Activated CD4-positive, alpha-beta T cell treated with anti-CD3 and anti-CD28 coated beads, Interleukin-2, amount 10 ng/mL, durations not matched to agents 24 days and 14 days (primary cell): ENCODE measurements at regions of chr5 and their contacts with region 1.

Region 1: DNA sequence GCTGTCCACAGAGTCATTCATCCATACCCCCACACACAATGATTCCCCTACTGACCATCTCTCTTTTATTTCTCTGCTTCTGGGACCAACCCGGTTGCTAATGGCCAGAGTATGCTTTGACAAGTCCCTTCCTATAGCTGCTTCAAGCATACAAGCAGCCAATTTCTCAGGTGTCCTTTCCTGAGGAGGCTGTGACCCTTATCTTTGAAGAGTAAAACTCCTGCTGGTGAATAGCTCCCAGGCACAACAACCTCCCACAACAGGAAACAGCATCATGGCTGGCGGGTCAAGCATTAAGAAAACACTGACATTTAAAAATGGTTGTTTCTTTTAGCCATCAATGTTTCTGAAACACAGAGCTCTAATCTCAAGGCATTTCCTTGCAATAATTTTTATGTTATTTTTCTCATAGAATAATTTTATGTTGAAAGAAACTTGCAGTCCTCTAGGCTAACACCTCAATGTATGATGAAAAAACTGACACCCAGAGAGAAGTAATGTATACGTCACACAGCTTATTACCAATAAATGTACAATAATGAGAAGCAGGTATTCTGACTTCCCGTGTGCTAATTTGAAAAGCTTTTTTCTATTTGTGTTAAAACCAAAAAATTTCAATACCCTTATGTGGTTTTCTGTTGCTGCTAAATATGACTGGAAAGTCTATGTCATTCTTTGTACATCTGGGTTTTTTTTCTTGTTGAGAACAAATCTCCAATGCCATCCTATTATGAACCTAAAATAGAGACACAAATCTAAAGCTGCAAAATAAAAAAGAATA is 7.5 kb upstream of the PAM start:
- DNase-seq: no peak
- H3K4me3 Mint-ChIP-seq: peak overlapping the region; percentile 15
- H3K27ac Mint-ChIP-seq: peak overlapping the region; percentile 22
- H3K4me1 Mint-ChIP-seq: peaks cover 11% of the 10 kb centered on the region
- H3K27me3 Mint-ChIP-seq: no peaks in the 10 kb centered on the region

Region 2: DNA sequence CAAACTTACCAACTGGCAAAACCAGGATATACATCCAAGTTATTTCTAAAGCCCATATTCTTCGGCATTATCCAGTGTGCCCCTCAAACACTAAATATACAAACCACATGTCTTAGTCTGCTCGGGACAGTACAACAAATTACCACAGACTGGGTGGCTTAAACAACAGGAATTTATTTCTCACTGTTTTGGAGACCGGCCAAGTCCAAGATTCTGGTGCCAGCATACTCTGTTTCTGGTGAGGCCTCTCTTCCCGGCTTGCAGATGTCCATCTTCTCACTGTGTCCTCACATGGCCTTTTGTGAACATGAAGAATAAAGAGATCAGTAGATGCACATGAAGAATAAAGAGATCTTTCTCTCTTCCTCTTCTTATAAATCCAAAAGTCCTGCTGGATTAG is 235.9 kb before region 1 on chr5:
- intact Hi-C with region 1: no loop called
- DNase-seq: no peak
- H3K4me3 Mint-ChIP-seq: no peak overlapping the region
- H3K27ac Mint-ChIP-seq: no peak overlapping the region
- H3K4me1 Mint-ChIP-seq: no peaks in the 10 kb centered on the region
- H3K27me3 Mint-ChIP-seq: no peaks in the 10 kb centered on the region

Region 3: DNA sequence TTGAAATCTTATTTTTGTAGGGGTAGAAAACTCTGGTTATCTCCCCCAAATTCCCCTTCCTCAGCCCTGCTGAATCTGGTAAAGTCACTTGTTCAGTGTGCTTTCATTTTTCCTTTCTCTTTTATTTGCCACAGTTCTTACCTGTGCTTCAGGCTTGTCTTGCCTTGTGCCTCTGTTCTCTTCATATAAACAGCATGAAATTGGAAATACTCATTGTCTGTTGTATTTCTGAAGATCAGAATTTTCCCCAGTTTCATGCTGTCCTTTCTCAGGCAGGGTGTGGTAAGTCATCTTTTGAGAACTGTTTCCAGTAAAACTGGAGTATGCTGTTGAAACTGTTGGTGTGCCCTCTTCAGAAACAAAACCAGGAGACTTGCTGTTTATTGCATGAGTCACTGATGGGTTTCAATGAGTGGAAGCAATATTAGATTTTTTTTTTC is 14.5 kb after region 1 on chr5:
- intact Hi-C with region 1: loop called (anchors 1 kb)
- DNase-seq: peak; percentile 69
- H3K4me3 Mint-ChIP-seq: peak overlapping the region; percentile 82
- H3K27ac Mint-ChIP-seq: peak overlapping the region; percentile 90
- H3K4me1 Mint-ChIP-seq: peaks cover 68% of the 10 kb centered on the region
- H3K27me3 Mint-ChIP-seq: no peaks in the 10 kb centered on the region

Region 4: GRCh38 chr5:102845041-102845440 is 97.5 kb after region 1 on chr5:
- intact Hi-C with region 1: no loop called
- DNase-seq: no peak
- H3K4me3 Mint-ChIP-seq: no peak overlapping the region
- H3K27ac Mint-ChIP-seq: no peak overlapping the region
- H3K4me1 Mint-ChIP-seq: no peaks in the 10 kb centered on the region
- H3K27me3 Mint-ChIP-seq: no peaks in the 10 kb centered on the region